ENCODE measurements at regions of chr4 and their contacts with region 1.

Region 1: DNA sequence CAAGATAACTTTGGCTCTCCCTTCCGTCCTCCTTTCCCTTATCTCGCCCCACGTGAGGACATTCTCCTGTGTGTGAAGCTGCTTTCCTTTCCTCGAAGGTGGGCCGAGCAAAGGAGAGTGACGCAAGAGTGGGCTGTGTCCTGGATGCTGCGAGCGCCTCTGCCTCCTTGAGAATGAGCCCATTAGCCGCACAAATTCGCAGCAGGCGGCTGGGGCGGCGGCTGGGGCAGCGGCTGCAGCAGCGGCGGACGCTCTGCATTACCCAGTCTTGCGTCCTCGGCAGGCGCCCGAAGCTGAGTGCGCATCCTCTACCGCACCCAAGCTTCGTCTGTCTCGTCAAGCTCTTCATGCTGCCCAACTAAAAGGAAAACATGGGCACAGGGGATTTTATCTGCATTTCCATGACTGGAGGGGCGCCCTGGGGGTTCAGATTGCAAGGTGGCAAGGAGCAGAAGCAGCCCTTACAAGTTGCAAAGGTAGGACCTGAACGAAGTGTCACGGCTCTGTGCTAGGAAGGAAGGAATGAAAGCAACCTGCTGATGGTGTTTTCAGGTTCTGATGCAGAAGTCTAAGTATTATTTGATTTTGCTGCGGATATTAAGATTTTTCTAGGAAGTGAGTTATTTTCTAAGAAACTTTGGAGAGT is at the start of gene SYNPO2:
- DNase-seq: peak; percentile 37
- ATAC-seq: peak; percentile 36
- H3K4me3 ChIP-seq: peak within 1 kb of the TSS in 4 of 5 experiments; percentile 4 to 52 (median 24)
- H3K4me3 Mint-ChIP-seq: peak within 1 kb of the TSS; percentile 71
- H3K27ac ChIP-seq: no peak within 1 kb of the TSS
- H3K27ac Mint-ChIP-seq: no peak within 1 kb of the TSS
- H3K4me1 ChIP-seq: peaks cover 8 to 11% of the 10 kb centered on the region in 2 donors
- H3K4me1 Mint-ChIP-seq: peaks cover 15% of the 10 kb centered on the region
- H3K27me3 ChIP-seq: peaks cover 0 to 18% (median 15%) of the 10 kb centered on the region in 4 experiments
- H3K27me3 Mint-ChIP-seq: peaks cover 44% of the 10 kb centered on the region
- CTCF ChIP-seq: no peak
- total RNA-seq, gene SYNPO2: 0.10 and 0.20 TPM in 2 replicates

Region 2: GRCh38 chr4:118740869-118741268 is 147.9 kb before region 1 on chr4:
- CTCF ChIA-PET with region 1: interaction called, 18 read pairs
- POLR2A ChIA-PET with region 1: no interaction called
- intact Hi-C with region 1: loop called (anchors 1 kb)
- DNase-seq: peak; percentile 29
- ATAC-seq: no peak
- H3K4me3 ChIP-seq: no peak overlapping the region
- H3K4me3 Mint-ChIP-seq: no peak overlapping the region
- H3K27ac ChIP-seq: no peak overlapping the region
- H3K27ac Mint-ChIP-seq: no peak overlapping the region
- H3K4me1 ChIP-seq: no peaks in the 10 kb centered on the region
- H3K4me1 Mint-ChIP-seq: no peaks in the 10 kb centered on the region
- H3K27me3 ChIP-seq: no peaks in the 10 kb centered on the region
- H3K27me3 Mint-ChIP-seq: no peaks in the 10 kb centered on the region
- CTCF ChIP-seq: peak; percentile 82

Region 3: GRCh38 chr4:118772081-118772766 is 116.6 kb before region 1 on chr4:
- CTCF ChIA-PET with region 1: interaction called, 53 read pairs
- POLR2A ChIA-PET with region 1: no interaction called
- intact Hi-C with region 1: loop called (anchors 1 kb)
- DNase-seq: peak; percentile 60
- ATAC-seq: peak; percentile 65
- H3K4me3 ChIP-seq: no peak overlapping the region
- H3K4me3 Mint-ChIP-seq: no peak overlapping the region
- H3K27ac ChIP-seq: no peak overlapping the region
- H3K27ac Mint-ChIP-seq: no peak overlapping the region
- H3K4me1 ChIP-seq: no peaks in the 10 kb centered on the region
- H3K4me1 Mint-ChIP-seq: no peaks in the 10 kb centered on the region
- H3K27me3 ChIP-seq: no peaks in the 10 kb centered on the region
- H3K27me3 Mint-ChIP-seq: no peaks in the 10 kb centered on the region
- CTCF ChIP-seq: peak; percentile 85

Measured in B cell (primary cell).